Naive thymus-derived CD4-positive, alpha-beta T cell (primary cell): ENCODE measurements at regions of chr21 and their contacts with region 1.

Region 1: DNA sequence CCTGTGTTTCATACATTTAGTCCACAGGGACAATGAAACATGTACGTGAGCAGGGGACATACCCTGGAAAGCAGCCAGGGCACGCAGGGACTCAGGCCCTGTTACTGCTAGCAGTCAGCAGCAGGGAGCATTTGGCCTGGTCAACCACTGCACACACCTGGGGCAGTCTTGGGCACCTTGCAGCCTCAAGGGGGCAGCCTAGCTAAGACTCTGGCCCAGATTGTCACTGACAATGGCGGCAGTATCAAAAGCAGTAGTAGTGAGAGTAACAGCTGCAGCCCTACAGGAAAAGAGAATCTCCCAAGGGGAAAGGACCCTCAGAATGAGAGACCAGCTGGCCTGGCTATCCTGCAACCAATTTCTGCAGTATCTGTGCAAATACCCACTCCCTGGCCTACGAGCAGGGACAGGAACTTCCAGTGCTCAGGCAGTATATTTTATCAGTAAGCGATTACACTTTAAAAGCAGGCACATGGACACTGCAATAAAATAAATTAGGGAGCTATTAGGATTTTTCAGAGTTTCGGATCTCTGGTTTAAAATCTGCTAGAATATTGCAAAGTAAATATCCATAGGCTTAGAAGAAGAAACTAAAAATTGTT is 475.6 kb downstream of the LTN1 start:
- DNase-seq: peak; percentile 24 to 61 (median 51)
- ATAC-seq: peak; percentile 90
- H3K4me3 ChIP-seq: no peak overlapping the region
- H3K4me3 Mint-ChIP-seq: no peak overlapping the region
- H3K27ac ChIP-seq: no peak overlapping the region
- H3K27ac Mint-ChIP-seq: no peak overlapping the region
- H3K4me1 ChIP-seq: no peaks in the 10 kb centered on the region
- H3K4me1 Mint-ChIP-seq: peaks cover 0 to 2% (median 0%) of the 10 kb centered on the region in 7 donors
- H3K27me3 ChIP-seq: no peaks in the 10 kb centered on the region
- H3K27me3 Mint-ChIP-seq: peaks cover 0 to 11% (median 0%) of the 10 kb centered on the region in 5 donors

Region 2: DNA sequence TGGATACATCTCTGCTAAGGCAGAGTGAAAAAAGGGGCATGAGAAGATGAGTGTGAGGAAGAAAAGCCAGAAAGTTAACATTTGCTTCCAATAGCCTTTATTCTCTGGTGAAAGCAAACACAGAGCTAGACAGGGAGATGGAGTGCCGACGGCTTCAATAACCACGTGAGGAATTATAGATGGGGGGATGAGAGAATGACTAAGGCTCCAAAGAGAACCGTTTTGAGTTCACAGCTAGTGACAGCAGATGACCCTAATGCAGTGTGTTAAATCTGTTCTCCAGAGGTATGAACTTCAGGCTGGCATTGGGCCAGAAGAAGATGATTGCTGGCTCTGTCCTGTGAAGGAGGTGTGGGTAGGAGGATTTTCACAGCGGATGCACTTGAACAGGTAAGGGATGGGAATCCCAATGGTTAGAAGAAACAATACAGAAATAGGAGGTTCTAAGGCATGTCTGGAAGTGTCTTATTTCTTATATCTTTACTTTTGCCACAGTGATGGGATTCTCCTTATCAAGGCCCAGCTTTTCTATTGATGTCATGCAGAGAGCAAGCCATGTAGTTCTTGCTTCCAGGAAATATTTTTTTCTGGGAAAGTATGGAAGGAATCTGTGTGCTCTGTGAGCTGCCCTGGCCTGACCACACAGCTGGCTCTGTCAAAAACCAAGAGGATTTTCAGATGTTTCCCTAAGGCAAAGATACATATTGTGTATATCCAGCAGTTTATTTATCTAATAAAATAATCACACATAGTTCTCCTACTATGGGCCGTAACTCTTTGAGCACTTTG is 98.2 kb before region 1 on chr21:
- CTCF ChIA-PET with region 1: no interaction called
- POLR2A ChIA-PET with region 1: no interaction called
- intact Hi-C with region 1: no loop called
- DNase-seq: no peak
- ATAC-seq: no peak
- H3K4me3 ChIP-seq: no peak overlapping the region
- H3K4me3 Mint-ChIP-seq: no peak overlapping the region
- H3K27ac ChIP-seq: no peak overlapping the region
- H3K27ac Mint-ChIP-seq: no peak overlapping the region
- H3K4me1 ChIP-seq: no peaks in the 10 kb centered on the region
- H3K4me1 Mint-ChIP-seq: no peaks in the 10 kb centered on the region
- H3K27me3 ChIP-seq: no peaks in the 10 kb centered on the region
- H3K27me3 Mint-ChIP-seq: no peaks in the 10 kb centered on the region

Region 3: DNA sequence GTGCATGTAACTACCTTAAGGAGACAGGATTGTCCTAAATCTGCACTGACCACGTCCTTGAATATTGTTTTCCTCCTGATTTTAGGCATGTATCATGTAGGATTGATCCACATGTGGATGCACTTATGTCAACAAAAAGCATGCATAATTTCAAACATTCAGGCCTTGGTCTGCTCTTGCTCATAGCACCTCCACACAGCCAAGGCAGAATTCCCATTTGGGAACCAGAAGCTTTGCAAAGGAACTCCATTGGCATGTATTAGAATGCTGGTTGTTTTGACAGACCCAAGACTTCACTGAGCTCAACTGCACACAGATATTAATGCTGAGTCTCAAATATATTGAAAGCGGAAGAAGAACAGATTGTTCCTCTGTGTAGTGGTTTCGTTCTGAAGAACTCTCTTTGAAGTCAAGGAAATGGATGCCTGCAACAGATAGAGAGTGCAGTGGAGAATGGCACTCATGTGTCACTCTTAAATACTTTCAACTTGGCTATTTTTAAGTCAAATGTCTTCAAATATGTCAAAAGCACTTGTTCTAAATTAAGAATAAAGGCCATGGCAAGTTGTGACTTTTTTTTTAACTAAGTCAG is 88.0 kb after region 1 on chr21:
- CTCF ChIA-PET with region 1: no interaction called
- POLR2A ChIA-PET with region 1: no interaction called
- intact Hi-C with region 1: loop called in 1 of 2 experiments (anchors 5 kb)
- DNase-seq: peak in 7 of 9 donors; percentile 18 to 69 (median 64)
- ATAC-seq: peak; percentile 96
- H3K4me3 ChIP-seq: no peak overlapping the region
- H3K4me3 Mint-ChIP-seq: peak overlapping the region; percentile 35 to 79 (median 68)
- H3K27ac ChIP-seq: no peak overlapping the region
- H3K27ac Mint-ChIP-seq: peak overlapping the region in 7 of 9 donors; percentile 0 to 73 (median 51)
- H3K4me1 ChIP-seq: peaks cover 14 to 15% of the 10 kb centered on the region in 2 donors
- H3K4me1 Mint-ChIP-seq: peaks cover 14 to 45% (median 31%) of the 10 kb centered on the region in 7 donors
- H3K27me3 ChIP-seq: no peaks in the 10 kb centered on the region
- H3K27me3 Mint-ChIP-seq: no peaks in the 10 kb centered on the region

Region 4: DNA sequence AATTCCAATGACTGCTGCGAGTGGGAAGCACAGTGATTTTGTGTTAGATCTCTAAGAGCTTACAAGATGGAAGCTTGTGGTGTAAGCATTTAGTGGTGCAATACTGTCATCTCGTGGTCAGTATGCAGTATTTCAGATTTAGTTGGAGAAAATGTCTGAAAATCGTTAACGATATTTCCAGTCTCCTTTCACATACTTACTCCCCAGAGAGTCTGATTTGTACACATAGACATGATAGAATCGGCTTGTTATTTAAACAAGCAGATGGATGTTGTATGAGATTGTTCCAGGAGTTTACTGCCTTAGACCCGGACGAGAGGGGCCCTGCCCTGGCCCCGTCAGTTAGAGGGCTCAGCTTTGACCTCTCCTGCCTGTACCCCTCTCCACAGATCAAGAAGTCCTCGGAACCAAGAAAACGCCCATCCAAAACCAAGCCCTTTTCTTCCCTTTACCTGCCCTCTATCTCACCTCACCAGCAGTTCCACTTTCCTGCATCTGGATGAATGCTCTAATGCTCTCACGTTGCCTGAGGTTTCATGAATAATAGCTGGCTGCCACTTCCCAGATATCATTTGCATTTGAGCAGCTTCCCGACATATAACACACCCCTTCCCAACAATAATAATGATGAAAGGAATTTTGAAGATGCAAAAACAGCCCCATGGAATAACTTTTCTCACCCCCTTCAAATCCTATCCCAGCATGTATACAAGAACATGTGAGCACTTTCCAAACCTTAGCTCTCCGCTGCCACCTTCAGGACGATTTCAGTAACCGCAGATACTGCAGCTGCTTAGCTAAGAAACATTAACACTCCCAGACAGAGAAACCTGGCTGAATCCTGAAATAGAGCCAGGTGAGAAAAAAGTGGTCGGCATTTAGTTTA is 228.3 kb after region 1 on chr21:
- CTCF ChIA-PET with region 1: interaction called, 48 read pairs
- POLR2A ChIA-PET with region 1: interaction called, 3 read pairs
- intact Hi-C with region 1: loop called (anchors 1 kb)
- DNase-seq: peak; percentile 31 to 69 (median 60)
- ATAC-seq: peak; percentile 91
- H3K4me3 ChIP-seq: peak overlapping the region; percentile 49
- H3K4me3 Mint-ChIP-seq: no peak overlapping the region
- H3K27ac ChIP-seq: no peak overlapping the region
- H3K27ac Mint-ChIP-seq: no peak overlapping the region
- H3K4me1 ChIP-seq: peaks cover 0 to 3% of the 10 kb centered on the region in 2 donors
- H3K4me1 Mint-ChIP-seq: no peaks in the 10 kb centered on the region
- H3K27me3 ChIP-seq: no peaks in the 10 kb centered on the region
- H3K27me3 Mint-ChIP-seq: peaks cover 0 to 5% (median 0%) of the 10 kb centered on the region in 5 donors

Region 5: DNA sequence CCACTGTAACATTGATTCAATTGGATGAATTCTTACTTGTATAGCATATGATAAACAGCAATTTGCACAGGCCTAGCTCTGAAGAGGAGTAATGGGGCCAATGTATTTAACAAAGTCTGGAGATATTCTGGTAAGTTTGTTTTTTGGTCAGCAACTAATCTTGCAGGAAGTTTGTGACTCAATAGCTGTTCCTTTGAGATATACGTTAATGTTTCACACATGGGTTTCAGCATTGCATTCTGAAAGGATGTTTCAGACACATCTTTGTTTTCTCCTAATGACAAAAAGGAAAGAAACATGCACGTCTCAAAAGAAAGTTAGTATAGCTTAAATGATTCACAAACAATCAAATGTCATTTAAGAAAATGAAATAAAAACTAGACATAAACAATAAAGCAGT is 426.5 kb after region 1 on chr21:
- CTCF ChIA-PET with region 1: interaction called, 7 read pairs
- POLR2A ChIA-PET with region 1: no interaction called
- intact Hi-C with region 1: loop called (anchors 1 kb)
- DNase-seq: no peak
- ATAC-seq: no peak
- H3K4me3 ChIP-seq: no peak overlapping the region
- H3K4me3 Mint-ChIP-seq: no peak overlapping the region
- H3K27ac ChIP-seq: no peak overlapping the region
- H3K27ac Mint-ChIP-seq: peak overlapping the region in 1 of 9 donors; percentile 15
- H3K4me1 ChIP-seq: no peaks in the 10 kb centered on the region
- H3K4me1 Mint-ChIP-seq: peaks cover 0 to 9% (median 0%) of the 10 kb centered on the region in 7 donors
- H3K27me3 ChIP-seq: no peaks in the 10 kb centered on the region
- H3K27me3 Mint-ChIP-seq: no peaks in the 10 kb centered on the region